Right ventricle myocardium superior (tissue), 1 donor: ENCODE measurements at regions of chr20 and their contacts with region 1.

Region 1: DNA sequence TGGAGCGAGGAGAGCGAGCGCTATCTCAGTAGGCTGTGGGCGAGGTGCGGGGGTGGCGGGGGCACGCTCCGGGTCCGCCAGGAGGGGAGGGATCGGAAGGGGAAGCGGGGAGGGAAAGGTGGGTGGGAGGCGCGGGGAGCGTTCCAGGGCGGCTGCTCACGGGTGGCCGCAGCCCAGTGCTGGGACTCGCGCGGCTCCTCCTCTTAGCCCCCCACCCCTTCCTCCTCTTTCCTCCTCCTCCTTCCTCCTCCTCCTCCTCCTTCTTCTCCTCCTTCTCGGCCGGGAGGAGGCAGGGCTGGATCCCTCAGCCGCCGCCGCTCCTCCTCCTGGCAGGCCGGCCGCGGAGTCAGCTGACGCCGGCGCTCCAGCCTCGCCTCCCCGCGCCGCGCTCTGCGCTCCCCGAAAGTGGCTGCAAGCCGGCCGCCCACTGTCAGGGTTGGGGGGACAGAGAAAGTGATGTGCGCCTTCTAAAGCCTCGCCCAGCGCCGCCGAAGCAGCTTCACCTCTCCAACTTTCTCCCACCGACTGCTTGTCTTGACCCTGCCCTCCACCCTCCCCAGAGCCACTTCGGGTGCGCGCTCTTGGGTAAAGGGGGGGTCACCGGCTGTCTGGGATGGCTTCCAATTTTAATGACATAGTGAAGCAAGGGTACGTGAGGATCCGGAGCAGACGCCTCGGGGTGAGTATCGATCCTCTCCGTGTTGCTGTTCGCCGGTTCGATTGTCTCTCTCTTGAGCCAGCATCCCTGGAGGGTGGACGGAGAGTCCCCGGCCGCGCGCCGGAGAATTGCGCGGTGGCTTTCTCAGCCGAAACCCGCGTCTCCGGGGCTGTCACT is at the start of gene DOK5:
- DNase-seq: peak; percentile 72
- ATAC-seq: peak; percentile 93
- total RNA-seq, gene DOK5: 2.9 TPM

Region 2: GRCh38 chr20:54382422-54382821 is 93.1 kb before region 1 on chr20:
- intact Hi-C with region 1: no loop called
- DNase-seq: no peak
- ATAC-seq: no peak

Region 3: GRCh38 chr20:54633374-54634355 is 158.1 kb after region 1 on chr20:
- intact Hi-C with region 1: loop called (anchors 10 kb)
- DNase-seq: no peak
- ATAC-seq: no peak